ENCODE measurements at regions of chrX and their contacts with region 1.

Region 1: DNA sequence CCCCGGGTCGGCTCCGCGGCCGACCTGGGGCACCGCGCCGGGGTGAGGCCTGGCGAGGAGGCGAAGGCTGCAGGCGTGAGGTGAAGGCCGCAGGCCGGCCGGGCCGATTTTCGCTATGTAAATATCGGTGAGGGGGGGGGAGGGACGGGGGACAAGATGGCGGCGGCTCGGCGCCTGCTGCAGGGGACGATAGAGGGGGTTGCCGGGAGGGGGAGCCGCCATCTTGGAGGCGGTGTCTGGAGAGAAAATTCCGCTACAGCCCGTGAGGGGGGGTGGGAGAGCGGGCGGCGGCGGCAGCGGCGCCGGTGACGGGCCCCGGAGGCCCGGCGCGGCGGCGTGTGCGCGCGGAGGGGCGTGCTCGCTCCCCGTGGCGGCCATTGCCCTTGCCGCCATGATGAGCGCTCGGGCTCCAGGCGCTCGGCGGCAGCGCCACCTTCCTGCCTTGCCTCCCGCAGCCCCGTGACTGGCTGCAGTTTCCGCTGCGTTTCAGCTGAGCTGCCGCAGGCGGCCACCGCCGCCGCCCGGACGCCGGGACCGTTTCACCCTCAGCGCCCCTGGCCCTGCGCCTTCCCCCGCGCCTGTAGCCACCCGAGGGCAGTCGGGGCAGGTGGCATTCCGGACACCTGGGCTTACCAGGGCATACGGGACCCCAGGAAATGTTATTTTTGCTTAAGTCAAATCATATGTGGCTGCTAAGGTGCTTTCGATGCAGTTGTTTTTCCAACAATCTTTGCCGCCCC is 692 bp downstream of the ZFX start:
- DNase-seq: peak; percentile 72
- ATAC-seq: peak; percentile 68
- H3K4me3 Mint-ChIP-seq: peak overlapping the region; percentile 86
- H3K27ac Mint-ChIP-seq: peak overlapping the region; percentile 86
- H3K4me1 Mint-ChIP-seq: peaks cover 61% of the 10 kb centered on the region
- H3K27me3 Mint-ChIP-seq: no peaks in the 10 kb centered on the region
- CTCF ChIP-seq: no peak

Region 2: DNA sequence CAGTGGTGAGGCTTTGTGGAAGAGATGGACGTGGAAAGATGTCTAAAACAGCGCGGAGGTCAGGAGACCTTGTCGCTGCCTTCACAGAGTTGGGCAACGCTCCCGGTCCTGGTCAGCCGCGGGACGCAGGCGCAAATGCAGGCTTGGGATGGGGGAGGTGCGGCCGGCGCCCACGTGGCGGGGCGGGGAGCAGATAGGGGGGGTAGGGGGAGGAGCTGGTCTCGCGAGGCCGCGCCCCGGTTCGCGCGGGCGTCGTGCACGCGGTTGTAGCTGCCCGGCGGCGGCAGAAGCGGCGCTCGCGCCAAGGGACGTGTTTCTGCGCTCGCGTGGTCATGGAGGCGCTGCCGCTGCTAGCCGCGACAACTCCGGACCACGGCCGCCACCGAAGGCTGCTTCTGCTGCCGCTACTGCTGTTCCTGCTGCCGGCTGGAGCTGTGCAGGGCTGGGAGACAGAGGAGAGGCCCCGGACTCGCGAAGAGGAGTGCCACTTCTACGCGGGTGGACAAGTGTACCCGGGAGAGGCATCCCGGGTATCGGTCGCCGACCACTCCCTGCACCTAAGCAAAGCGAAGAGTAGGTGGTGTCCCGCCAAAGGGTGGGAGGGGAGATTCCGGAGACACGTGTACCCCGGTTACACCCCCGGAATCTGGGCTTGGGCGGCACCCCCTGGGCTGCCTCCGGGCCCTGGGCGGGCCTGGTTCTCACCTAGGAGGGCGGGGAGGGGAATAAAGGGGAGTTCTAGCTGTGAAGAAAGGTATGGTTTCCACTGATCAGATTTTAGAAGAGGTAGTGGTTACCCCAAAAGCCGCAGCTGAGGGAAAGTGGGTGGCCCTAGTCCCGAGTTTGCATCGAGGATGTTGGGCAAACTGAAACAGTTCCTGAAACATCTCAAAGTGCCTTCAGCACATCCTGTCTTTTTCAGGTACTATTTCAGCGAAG is 482.7 kb before region 1 on chrX and contains the start of gene PRDX4:
- CTCF ChIA-PET with region 1: no interaction called
- POLR2A ChIA-PET with region 1: no interaction called
- intact Hi-C with region 1: loop called (anchors 10 kb)
- DNase-seq: peak; percentile 66
- ATAC-seq: peak; percentile 85
- H3K4me3 Mint-ChIP-seq: peak within 1 kb of the TSS; percentile 84
- H3K27ac Mint-ChIP-seq: peak within 1 kb of the TSS; percentile 91
- H3K4me1 Mint-ChIP-seq: peaks cover 25% of the 10 kb centered on the region
- H3K27me3 Mint-ChIP-seq: no peaks in the 10 kb centered on the region
- CTCF ChIP-seq: no peak
- total RNA-seq, gene PRDX4: 29.2 and 35.5 TPM in 2 replicates

Region 3: DNA sequence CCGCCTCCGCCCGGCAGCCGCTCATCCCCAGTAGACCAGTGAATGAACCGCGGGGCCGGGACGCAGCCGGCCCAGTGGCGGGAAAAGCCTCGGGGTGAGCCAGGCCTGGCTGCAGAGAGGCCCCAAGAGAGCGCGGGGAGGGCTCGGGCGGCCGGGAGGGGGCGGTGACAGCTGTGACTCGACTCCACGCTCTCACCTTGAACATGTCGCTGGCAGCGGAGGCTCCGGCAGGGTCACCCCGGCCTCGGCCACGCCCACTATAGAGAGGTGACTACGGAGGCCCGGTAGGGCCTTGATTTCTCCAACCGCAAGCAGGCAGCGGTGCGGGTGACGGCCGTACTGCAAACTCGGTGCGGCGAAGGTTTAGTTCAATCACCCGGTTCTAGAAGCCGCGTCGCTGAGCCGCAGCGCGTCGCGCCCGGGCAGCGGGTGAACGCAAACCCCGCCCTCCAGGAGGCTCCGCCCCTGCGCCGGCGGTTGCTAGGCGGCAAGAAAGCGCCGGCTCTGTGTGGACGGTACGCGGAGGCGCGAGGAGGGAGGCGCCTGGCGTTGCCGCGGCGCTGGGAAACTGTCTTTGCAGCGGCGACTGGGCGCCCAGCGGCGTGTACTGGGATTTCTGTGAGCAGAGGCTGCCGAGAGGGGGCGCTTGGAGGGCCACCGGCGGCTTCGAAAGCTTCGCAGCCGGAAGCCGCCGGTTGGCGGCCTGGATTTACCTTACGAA is 242.6 kb before region 1 on chrX and contains the starts of genes APOO and CXorf58:
- CTCF ChIA-PET with region 1: no interaction called
- POLR2A ChIA-PET with region 1: no interaction called
- intact Hi-C with region 1: loop called (anchors 1 kb)
- DNase-seq: peak; percentile 85
- ATAC-seq: peak; percentile 90
- H3K4me3 Mint-ChIP-seq: peak within 1 kb of the TSS; percentile 82
- H3K27ac Mint-ChIP-seq: peak within 1 kb of the TSS; percentile 88
- H3K4me1 Mint-ChIP-seq: peaks cover 17% of the 10 kb centered on the region
- H3K27me3 Mint-ChIP-seq: no peaks in the 10 kb centered on the region
- CTCF ChIP-seq: peak; percentile 7
- total RNA-seq, gene APOO: 14.0 and 16.6 TPM in 2 replicates
- total RNA-seq, gene CXorf58: not detected in 2 replicates

Region 4: DNA sequence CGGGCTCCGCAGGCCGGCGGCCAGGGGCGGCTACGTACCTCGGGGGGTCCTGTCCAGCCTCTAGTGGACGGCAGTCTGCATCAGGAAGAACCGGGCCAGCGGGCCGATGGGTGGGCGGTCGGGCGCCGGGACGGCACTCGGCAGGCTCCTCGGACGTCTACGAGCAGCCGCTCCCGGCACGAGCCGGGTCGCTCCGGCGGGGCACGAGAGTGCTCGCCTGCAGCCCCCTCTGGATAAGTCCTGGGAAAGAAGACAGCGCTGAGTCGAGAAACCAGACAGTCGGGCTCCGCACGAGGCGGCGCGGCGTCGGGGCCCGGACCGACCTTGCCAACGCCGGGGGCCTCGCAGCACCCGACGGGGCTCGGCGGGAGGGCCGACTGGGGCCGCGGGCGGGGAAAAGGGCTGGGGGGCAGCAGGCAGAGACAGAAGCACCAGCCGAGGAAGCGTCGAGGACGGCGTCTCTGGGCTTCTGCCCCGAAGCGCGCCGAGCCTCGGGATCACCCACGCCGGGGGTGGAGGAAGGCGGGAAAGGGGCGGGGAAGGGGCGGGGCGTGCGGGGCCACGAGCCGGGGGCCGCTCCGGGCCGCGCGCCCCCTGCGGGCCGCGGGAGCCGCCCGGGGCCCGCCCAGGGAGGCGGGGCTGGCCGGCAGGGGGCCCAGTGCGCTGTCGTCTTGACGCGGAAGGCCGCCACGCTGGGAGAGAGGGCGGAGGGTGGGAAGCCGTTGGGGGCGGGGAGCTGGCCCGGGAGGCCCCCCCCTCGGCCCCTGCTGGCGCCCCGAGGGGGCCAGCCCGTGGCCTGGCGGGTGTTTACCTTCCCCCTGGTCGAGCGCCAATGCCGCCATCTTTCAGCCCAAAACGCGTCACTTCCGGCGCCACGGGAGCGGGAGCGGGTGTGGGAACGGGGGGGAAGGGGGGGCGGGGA is 125.1 kb before region 1 on chrX:
- CTCF ChIA-PET with region 1: no interaction called
- POLR2A ChIA-PET with region 1: interaction called, 13 read pairs
- intact Hi-C with region 1: loop called (anchors 1 kb)
- DNase-seq: peak; percentile 70
- ATAC-seq: peak; percentile 91
- H3K4me3 Mint-ChIP-seq: peak overlapping the region; percentile 85
- H3K27ac Mint-ChIP-seq: peak overlapping the region; percentile 82
- H3K4me1 Mint-ChIP-seq: peaks cover 21% of the 10 kb centered on the region
- H3K27me3 Mint-ChIP-seq: no peaks in the 10 kb centered on the region
- CTCF ChIP-seq: no peak

Region 5: DNA sequence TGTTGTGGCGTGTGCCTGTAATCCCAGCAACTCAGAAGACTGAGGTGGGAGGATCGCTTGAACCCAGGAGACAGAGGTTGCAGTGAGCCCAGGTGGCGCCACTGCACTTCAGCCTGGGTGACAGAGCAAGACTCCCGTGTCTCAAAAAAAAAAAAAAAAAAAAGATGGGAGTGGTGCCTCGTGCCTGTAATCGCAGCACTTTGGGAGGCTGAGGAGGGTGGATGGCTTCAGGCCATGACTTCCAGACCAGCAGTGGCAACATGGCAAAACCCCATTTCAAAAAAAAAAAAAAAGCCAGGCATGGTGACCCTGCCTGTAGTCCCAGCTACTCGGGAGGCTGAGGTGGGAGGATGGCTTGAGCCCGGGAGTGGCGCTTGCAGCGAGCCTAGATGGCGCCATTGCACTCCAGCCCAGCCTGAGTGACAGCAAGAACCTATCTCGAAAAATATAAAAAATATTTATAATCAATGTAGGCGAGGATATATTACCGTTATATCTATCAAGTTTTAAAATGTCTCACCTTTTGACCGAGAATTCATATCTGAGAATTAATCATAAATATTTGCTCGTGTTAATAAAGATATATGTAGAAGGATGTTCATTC is 68.5 kb before region 1 on chrX:
- CTCF ChIA-PET with region 1: no interaction called
- POLR2A ChIA-PET with region 1: no interaction called
- intact Hi-C with region 1: loop called (anchors 1 kb)
- DNase-seq: peak; percentile 14
- ATAC-seq: peak; percentile 65
- H3K4me3 Mint-ChIP-seq: no peak overlapping the region
- H3K27ac Mint-ChIP-seq: no peak overlapping the region
- H3K4me1 Mint-ChIP-seq: peaks cover 3% of the 10 kb centered on the region
- H3K27me3 Mint-ChIP-seq: no peaks in the 10 kb centered on the region
- CTCF ChIP-seq: no peak

Region 6: DNA sequence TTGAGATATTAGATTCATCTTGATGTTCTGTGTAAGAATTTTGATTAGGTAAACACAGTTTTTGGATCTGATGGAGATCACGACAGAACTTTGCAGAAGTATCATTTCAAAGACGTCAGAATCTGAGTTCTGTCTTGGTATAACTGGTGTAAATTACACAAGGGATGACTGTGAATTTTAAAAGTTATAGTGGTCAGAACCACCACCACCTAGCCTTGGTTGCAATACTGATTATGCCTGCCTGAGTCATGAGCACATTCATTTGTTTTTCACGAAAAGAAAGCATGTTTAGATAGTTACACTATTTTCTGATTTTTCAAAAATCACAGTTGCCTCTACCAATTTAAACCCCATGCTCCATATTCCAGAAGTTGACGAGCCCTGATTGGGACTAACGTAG is 54.1 kb after region 1 on chrX:
- CTCF ChIA-PET with region 1: no interaction called
- POLR2A ChIA-PET with region 1: no interaction called
- intact Hi-C with region 1: loop called (anchors 5 kb)
- DNase-seq: no peak
- ATAC-seq: no peak
- H3K4me3 Mint-ChIP-seq: no peak overlapping the region
- H3K27ac Mint-ChIP-seq: peak overlapping the region; percentile 74
- H3K4me1 Mint-ChIP-seq: peaks cover 33% of the 10 kb centered on the region
- H3K27me3 Mint-ChIP-seq: no peaks in the 10 kb centered on the region
- CTCF ChIP-seq: no peak

Region 7: DNA sequence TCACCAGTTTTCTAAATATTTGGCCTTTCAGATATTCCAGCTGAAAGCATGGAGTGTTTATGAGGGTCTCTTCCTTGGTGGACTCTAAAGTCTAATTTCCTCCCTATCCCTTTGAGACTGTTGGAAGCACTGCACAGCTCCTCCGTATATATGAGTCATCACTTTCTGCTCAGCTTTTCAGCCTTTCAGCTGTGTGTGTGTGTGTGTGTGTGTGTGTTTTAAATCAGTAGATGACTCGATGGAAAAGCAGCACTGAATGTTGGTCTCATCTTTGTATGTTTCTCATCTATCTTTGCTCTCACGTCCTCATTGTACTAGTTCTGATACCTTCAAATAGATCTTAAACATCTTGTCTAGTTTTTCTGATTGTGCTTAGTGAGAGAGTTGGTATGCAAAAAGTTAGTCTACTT is 80.9 kb after region 1 on chrX:
- CTCF ChIA-PET with region 1: no interaction called
- POLR2A ChIA-PET with region 1: no interaction called
- intact Hi-C with region 1: no loop called
- DNase-seq: no peak
- ATAC-seq: no peak
- H3K4me3 Mint-ChIP-seq: no peak overlapping the region
- H3K27ac Mint-ChIP-seq: no peak overlapping the region
- H3K4me1 Mint-ChIP-seq: peaks cover 2% of the 10 kb centered on the region
- H3K27me3 Mint-ChIP-seq: no peaks in the 10 kb centered on the region
- CTCF ChIP-seq: no peak